ENCODE measurements at regions of chr12 and their contacts with region 1.

Region 1: GRCh38 chr12:79420146-79420618 is 270.6 kb downstream of the PAWR start:
- DNase-seq: no peak
- H3K4me3 ChIP-seq: no peak overlapping the region
- H3K27ac ChIP-seq: no peak overlapping the region
- H3K4me1 ChIP-seq: peaks cover 0 to 12% (median 8%) of the 10 kb centered on the region in 4 experiments; a peak in 4 of 7 replicates
- H3K27me3 ChIP-seq: no peaks in the 10 kb centered on the region
- CTCF ChIP-seq: peak in 2 of 3 experiments; percentile 56 to 63; a peak in 3 of 4 replicates
- EP300 ChIP-seq: no peak
- POLR2A ChIP-seq: no peak
- RAD21 ChIP-seq: peak; percentile 84 to 86

Region 2: DNA sequence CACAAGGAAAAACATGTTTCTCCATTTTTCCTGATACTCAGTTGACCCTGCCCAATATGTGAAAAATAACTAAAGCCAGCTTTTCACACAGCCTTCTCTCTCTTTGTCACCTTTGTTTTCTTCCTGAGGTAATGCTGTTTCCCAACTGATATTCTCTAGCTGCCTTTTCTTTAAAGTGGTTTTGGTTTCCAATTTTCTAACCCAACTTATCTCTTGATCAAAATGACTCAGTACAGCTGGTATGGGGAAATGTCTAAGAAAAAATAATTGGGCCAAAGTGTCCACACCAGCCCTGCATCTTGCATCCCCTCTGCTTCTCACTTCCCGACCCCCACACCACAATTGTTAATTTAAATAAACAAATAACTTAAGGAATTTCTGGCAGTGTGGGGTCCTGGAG is 361.9 kb before region 1 on chr12:
- CTCF ChIA-PET with region 1: no interaction called
- POLR2A ChIA-PET with region 1: no interaction called
- DNase-seq: no peak
- H3K4me3 ChIP-seq: no peak overlapping the region
- H3K27ac ChIP-seq: no peak overlapping the region
- H3K4me1 ChIP-seq: peaks cover 0 to 3% (median 3%) of the 10 kb centered on the region in 4 experiments; a peak in 4 of 7 replicates
- H3K27me3 ChIP-seq: no peaks in the 10 kb centered on the region
- CTCF ChIP-seq: no peak
- EP300 ChIP-seq: no peak
- POLR2A ChIP-seq: no peak
- RAD21 ChIP-seq: no peak

Region 3: DNA sequence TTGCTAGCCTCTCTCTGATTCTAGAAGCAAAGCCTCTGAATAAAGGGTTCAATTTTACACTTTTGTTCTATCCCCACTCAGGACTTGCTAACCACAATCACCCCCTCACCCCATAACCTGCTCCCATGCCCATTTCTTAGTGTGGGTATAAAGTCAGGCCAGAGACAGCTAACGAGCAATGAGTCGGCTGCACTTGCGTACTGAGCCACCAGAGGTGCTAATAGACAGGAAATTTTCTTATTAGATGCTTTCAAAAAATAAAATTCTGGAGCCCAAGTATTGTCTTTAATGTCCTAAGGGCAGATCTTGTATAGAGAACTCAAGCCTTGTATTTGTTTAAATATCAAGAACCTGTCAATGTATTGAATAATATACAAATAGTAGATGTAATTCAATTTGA is 298.7 kb before region 1 on chr12:
- CTCF ChIA-PET with region 1: no interaction called
- POLR2A ChIA-PET with region 1: no interaction called
- DNase-seq: no peak
- H3K4me3 ChIP-seq: no peak overlapping the region
- H3K27ac ChIP-seq: no peak overlapping the region
- H3K4me1 ChIP-seq: no peaks in the 10 kb centered on the region
- H3K27me3 ChIP-seq: no peaks in the 10 kb centered on the region
- CTCF ChIP-seq: peak; percentile 46 to 58 (median 55)
- EP300 ChIP-seq: no peak
- POLR2A ChIP-seq: no peak
- RAD21 ChIP-seq: peak; percentile 62 to 63

Region 4: DNA sequence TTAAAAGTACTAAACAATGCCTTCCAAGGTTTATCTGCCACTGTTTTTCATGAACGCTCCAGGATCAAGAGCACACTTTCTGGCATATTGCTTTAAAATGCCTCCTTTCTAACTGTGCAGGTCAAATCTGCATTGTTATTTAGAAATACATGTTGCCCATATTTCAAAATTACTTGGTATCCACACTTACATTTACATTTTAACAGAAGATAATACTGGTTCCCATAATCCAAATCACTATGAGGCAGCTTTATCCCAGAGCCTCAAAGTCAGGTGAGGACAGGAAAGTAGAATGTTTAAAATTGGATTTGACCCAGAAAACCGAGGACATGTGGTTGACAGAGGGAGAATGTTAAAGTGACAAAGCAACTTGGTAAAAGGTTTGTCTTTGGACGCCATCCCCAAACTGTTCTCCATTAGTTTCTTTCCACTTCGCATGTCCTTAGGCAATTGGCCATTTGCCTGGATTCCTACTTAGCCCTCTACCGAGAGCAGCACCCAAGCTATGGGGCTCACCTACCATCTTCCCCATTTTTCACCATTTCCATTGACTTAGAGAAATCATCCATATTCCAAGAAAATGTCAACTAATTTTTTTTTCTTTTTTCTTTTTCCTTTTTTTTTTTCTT is 82.4 kb before region 1 on chr12:
- CTCF ChIA-PET with region 1: no interaction called
- POLR2A ChIA-PET with region 1: no interaction called
- DNase-seq: no peak
- H3K4me3 ChIP-seq: no peak overlapping the region
- H3K27ac ChIP-seq: no peak overlapping the region
- H3K4me1 ChIP-seq: peaks cover 0 to 2% (median 0%) of the 10 kb centered on the region in 4 experiments; a peak in 3 of 7 replicates
- H3K27me3 ChIP-seq: no peaks in the 10 kb centered on the region
- CTCF ChIP-seq: no peak
- EP300 ChIP-seq: no peak
- POLR2A ChIP-seq: no peak
- RAD21 ChIP-seq: no peak

Region 5: GRCh38 chr12:79407671-79408622 is 12.2 kb before region 1 on chr12:
- CTCF ChIA-PET with region 1: interaction called, 18 read pairs
- POLR2A ChIA-PET with region 1: no interaction called
- DNase-seq: peak; percentile 38 to 63
- H3K4me3 ChIP-seq: no peak overlapping the region
- H3K27ac ChIP-seq: no peak overlapping the region; the same call in 1 of the 2 replicates
- H3K4me1 ChIP-seq: peaks cover 0 to 9% (median 4%) of the 10 kb centered on the region in 4 experiments; a peak in 3 of 7 replicates
- H3K27me3 ChIP-seq: no peaks in the 10 kb centered on the region
- CTCF ChIP-seq: peak; percentile 45 to 88 (median 83)
- EP300 ChIP-seq: no peak
- POLR2A ChIP-seq: no peak
- RAD21 ChIP-seq: peak; percentile 93 to 95